A549 (cell line): ENCODE measurements at regions of chr7 and their contacts with region 1.

Region 1: GRCh38 chr7:151519765-151520418 is at the start of gene RHEB:
- DNase-seq: peak; percentile 92 to 99
- ATAC-seq: peak; percentile 84 to 94
- H3K4me3 ChIP-seq: peak within 1 kb of the TSS; percentile 65
- H3K27ac ChIP-seq: peak within 1 kb of the TSS; percentile 97 to 99
- H3K4me1 ChIP-seq: peaks cover 23% of the 10 kb centered on the region
- CTCF ChIP-seq: no peak
- EP300 ChIP-seq: no peak
- POLR2A ChIP-seq: no peak
- RAD21 ChIP-seq: no peak
- polyA plus RNA-seq, gene RHEB: 148 and 198 TPM in 2 replicates

Region 2: GRCh38 chr7:151503902-151504714 is 15.8 kb before region 1 on chr7:
- CTCF ChIA-PET with region 1: interaction called, 10 read pairs
- POLR2A ChIA-PET with region 1: interaction called, 12 read pairs
- DNase-seq: peak in 1 of 2 experiments; percentile 78
- ATAC-seq: peak; percentile 89 to 92
- H3K4me3 ChIP-seq: no peak overlapping the region
- H3K27ac ChIP-seq: peak overlapping the region; percentile 68 to 79
- H3K4me1 ChIP-seq: peaks cover 72% of the 10 kb centered on the region
- CTCF ChIP-seq: no peak
- EP300 ChIP-seq: peak; percentile 52 to 54; a peak in 2 of 5 replicates
- POLR2A ChIP-seq: no peak
- RAD21 ChIP-seq: peak in 1 of 2 experiments; percentile 40; a peak in 2 of 5 replicates

Region 3: DNA sequence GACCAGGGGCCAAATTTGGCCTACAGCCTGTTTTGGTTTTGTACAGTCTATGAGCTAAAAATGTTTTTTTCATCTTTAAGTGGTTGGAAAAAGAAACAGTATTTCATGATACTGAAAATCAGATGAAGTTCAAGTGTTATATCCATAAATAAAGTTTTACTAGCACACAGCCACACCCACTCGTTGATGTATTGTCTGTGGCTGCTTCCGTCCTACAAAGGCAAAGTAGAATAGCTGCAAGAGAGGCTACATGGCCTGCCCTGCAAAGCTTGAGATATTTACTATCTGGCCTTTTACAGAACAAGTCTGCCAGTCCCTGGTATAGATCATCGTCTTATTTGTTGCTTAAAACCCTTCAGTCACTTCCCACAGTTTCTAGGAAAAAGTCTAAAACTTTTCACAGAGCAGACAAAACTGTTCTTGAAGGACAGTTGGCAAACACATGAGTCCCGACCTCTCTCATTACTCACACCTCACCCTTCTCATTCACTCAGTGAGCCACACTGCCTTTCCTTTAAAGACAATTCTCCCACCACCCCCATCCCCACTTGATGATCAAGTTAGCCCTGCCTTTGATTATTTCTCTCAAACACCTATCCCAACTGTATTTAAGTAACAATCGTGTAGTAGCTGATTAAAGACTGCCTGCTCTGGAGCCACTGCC is 10.1 kb before region 1 on chr7:
- CTCF ChIA-PET with region 1: interaction called, 10 read pairs
- POLR2A ChIA-PET with region 1: interaction called, 4 read pairs
- DNase-seq: no peak
- ATAC-seq: no peak
- H3K4me3 ChIP-seq: no peak overlapping the region
- H3K27ac ChIP-seq: no peak overlapping the region
- H3K4me1 ChIP-seq: peaks cover 49% of the 10 kb centered on the region
- CTCF ChIP-seq: no peak
- EP300 ChIP-seq: no peak
- POLR2A ChIP-seq: no peak
- RAD21 ChIP-seq: no peak

Region 4: DNA sequence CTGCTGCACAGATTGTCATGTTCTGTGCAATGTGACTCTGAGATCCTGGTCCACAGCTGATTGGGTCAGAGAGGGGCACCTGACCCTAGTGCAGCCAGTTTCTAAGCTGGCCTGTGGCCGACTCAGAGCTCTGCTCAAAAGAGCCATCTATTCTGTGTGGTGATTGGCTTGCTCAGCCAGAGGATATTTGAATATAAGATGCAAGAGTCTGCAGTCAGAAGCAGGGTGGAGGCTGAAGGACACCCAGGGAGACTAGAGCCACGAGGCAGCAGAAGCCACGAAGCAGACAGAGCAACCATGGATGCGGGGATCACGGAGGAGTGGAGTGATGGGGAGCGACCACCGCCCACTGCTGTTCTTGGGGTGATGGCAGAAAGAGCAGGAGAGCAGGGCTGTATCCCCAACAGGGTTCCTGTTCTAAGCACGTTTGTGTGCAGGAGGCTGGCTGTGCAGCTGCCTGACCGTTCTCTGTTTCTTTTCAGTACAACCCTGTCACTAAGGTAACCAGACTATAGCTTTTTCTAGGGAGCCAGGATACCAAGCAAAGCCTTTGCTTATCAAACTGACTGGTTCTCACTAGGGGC is 19.3 kb after region 1 on chr7:
- CTCF ChIA-PET with region 1: no interaction called
- POLR2A ChIA-PET with region 1: interaction called, 10 read pairs
- DNase-seq: no peak
- ATAC-seq: peak; percentile 71 to 78
- H3K4me3 ChIP-seq: no peak overlapping the region
- H3K27ac ChIP-seq: no peak overlapping the region
- H3K4me1 ChIP-seq: no peaks in the 10 kb centered on the region
- CTCF ChIP-seq: no peak
- EP300 ChIP-seq: no peak
- POLR2A ChIP-seq: no peak
- RAD21 ChIP-seq: no peak

Region 5: GRCh38 chr7:151608031-151608551 is 88.2 kb after region 1 on chr7:
- CTCF ChIA-PET with region 1: no interaction called
- POLR2A ChIA-PET with region 1: no interaction called
- DNase-seq: peak in 1 of 2 experiments; percentile 18
- ATAC-seq: peak; percentile 54 to 75; a peak in 5 of 6 replicates
- H3K4me3 ChIP-seq: no peak overlapping the region
- H3K27ac ChIP-seq: peak overlapping the region in 1 of 2 experiments; percentile 59; a peak in 3 of 6 replicates
- H3K4me1 ChIP-seq: peaks cover 28% of the 10 kb centered on the region
- CTCF ChIP-seq: no peak; the same call in 2 of the 3 replicates
- EP300 ChIP-seq: no peak
- POLR2A ChIP-seq: no peak
- RAD21 ChIP-seq: peak; percentile 19 to 50; a peak in 2 of 5 replicates